Gastrocnemius medialis (tissue), 4 donors: ENCODE measurements at regions of chr7 and their contacts with region 1.

Region 1: GRCh38 chr7:102404005-102404861 is 8.1 kb downstream of the PRKRIP1 start:
- DNase-seq: no peak
- ATAC-seq: peak; percentile 82 to 92
- H3K4me3 ChIP-seq: no peak overlapping the region
- H3K27ac ChIP-seq: no peak overlapping the region
- H3K4me1 ChIP-seq: no peaks in the 10 kb centered on the region
- H3K27me3 ChIP-seq: no peaks in the 10 kb centered on the region
- CTCF ChIP-seq: peak in 4 of 5 experiments; percentile 22 to 65 (median 52)
- POLR2A ChIP-seq: no peak

Region 2: DNA sequence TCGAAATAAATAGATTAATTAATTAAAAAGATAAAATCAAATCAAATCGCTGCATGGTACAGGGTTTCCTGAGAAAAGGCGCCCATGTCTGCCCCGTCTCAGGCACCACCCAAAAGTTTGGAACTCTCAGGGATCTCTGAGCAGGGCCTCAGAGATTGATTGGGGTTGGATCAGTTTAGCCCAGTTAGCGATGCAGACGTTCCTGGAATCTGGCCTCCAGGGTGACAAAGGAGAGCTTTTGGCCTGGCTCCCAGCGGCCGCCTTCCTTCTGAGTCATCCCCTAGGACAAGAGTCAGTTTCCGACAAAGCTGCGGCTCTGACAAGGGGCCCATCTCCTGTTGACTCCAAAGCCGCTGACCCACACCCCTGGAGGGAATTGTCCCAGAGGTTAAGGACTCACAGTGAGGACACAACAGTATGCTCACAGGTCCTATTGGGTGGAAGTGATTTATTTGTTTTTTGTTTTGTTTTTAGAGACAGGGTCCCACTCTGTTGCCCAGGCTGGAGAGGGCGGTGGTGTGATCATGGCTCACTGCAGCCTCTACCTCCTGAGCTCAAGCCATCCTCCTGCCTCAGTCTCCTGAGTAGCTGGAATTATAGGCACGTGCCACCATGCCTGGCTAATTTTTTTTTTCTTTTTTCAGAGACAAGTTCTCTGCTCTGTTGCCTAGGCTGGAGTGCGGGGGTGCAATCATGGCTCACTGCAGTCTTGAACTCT is 36.0 kb after region 1 on chr7:
- in situ Hi-C with region 1: no loop called
- intact Hi-C with region 1: no loop called
- DNase-seq: peak; percentile 80 to 87
- ATAC-seq: peak; percentile 96 to 97
- H3K4me3 ChIP-seq: no peak overlapping the region
- H3K27ac ChIP-seq: peak overlapping the region; percentile 46 to 59 (median 50)
- H3K4me1 ChIP-seq: peaks cover 13 to 14% of the 10 kb centered on the region in 2 donors
- H3K27me3 ChIP-seq: no peaks in the 10 kb centered on the region
- CTCF ChIP-seq: no peak
- POLR2A ChIP-seq: no peak

Region 3: DNA sequence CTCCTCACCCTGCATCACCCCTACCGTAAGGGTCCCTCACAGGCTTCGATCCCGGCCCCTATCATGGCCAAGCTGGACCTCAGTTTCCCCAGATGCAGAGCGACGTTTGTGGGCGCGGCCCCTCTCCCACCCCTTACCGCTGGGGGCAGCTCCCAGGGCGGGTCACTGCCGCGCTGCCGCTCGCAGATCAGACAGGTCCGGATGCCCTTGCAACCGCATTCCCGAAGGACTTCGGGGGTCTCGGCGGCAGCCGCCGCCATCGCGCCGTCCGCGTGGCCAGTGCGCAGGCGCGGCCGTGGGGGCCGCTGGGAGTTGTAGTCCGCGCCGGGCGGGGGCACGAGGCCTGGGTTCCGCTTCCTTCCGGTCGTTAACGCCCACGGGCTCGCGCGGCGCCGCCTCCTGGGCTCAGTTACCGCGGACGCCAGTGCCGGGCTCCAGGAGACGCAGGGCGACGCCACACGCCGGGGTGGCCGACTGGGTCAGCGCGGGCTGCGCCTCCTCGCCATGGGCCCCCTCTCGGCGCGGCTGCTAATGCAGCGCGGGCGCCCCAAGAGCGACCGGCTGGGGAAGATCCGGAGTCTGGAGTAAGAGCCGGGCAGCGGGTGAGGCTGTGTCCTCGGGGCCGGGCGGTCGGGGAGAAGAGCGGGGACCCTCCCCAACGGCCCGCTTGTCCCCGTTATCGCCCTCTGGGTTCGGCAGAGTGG is 60.5 kb after region 1 on chr7 and contains the starts of genes ALKBH4 and LRWD1:
- in situ Hi-C with region 1: loop called in 1 of 4 experiments (anchors 10 kb)
- intact Hi-C with region 1: no loop called
- DNase-seq: peak; percentile 90 to 94
- ATAC-seq: peak; percentile 89 to 92
- H3K4me3 ChIP-seq: peak within 1 kb of the TSS; percentile 88 to 100 (median 93)
- H3K27ac ChIP-seq: peak within 1 kb of the TSS; percentile 80 to 89 (median 84)
- H3K4me1 ChIP-seq: peaks cover 14 to 26% of the 10 kb centered on the region in 2 donors
- H3K27me3 ChIP-seq: no peaks in the 10 kb centered on the region
- CTCF ChIP-seq: peak in 4 of 5 experiments; percentile 19 to 36 (median 31)
- POLR2A ChIP-seq: peak; percentile 57 to 60
- total RNA-seq, gene ALKBH4: 8.7 to 15.1 (median 10.9) TPM
- total RNA-seq, gene LRWD1: 7.5 to 24.5 (median 18.0) TPM